PC-9 (cell line): ENCODE measurements at regions of chr14 and their contacts with region 1.

Region 1: DNA sequence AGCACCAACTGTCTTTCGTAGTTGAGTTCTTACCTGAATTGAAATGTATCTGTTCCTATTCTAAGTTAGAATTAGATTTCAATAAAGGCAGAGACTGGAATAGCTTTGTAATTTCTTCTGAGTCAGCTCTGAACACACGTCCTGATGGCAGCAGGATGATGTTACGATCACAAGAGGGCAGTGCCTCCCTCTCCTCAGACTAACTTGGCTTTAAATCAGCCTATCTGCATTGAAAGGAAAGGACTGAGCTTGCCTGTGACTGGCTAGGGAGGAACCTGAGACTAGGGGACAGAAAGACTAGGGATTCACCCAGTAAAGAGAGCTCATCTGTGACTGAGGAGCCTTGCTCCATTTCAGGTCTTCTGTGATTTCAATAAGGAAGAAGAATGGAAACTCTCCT is 323.7 kb upstream of the OR4E1 start:
- DNase-seq: no peak
- H3K4me3 ChIP-seq: no peak overlapping the region
- H3K27ac ChIP-seq: no peak overlapping the region
- H3K4me1 ChIP-seq: no peaks in the 10 kb centered on the region
- H3K27me3 ChIP-seq: no peaks in the 10 kb centered on the region
- CTCF ChIP-seq: no peak; the same call in 1 of the 2 replicates

Region 2: DNA sequence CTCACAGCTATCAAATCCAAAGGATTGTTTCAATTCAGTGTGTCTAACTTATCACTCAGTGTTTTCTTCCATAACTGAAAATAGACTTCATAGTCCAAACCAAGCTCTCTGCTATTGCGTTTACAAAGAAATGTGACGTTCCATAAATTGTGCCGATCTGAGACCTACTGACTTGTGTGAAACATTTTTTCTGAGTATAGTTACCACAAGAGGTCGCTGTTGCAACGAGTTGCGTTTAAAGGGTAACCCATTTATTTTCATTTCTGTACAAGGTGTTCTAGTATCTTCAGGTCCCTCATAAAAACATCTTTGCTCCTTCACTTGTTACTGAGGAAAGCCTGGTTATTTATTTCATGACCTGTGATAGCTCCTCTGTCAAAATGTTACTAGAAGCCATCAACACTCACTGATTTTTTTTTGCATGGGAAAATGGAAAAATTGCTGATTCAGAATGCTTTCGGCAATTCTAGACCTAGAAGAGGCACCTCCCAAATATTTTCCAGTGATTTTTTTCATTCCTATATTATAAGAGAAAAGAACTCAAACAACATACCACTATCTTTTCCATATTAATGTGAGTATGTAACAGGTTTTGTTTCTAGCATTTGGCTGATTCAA is 262.7 kb before region 1 on chr14:
- CTCF ChIA-PET with region 1: no interaction called
- POLR2A ChIA-PET with region 1: no interaction called
- intact Hi-C with region 1: no loop called
- DNase-seq: peak in 1 of 2 experiments; percentile 7
- H3K4me3 ChIP-seq: no peak overlapping the region
- H3K27ac ChIP-seq: no peak overlapping the region
- H3K4me1 ChIP-seq: no peaks in the 10 kb centered on the region
- H3K27me3 ChIP-seq: peaks cover 5% of the 10 kb centered on the region; the same call in 1 of the 2 replicates
- CTCF ChIP-seq: peak; percentile 78

Region 3: GRCh38 chr14:22010545-22011252 is 13.4 kb after region 1 on chr14:
- CTCF ChIA-PET with region 1: no interaction called
- POLR2A ChIA-PET with region 1: interaction called, 22 read pairs
- intact Hi-C with region 1: no loop called
- DNase-seq: no peak
- H3K4me3 ChIP-seq: no peak overlapping the region
- H3K27ac ChIP-seq: no peak overlapping the region
- H3K4me1 ChIP-seq: no peaks in the 10 kb centered on the region
- H3K27me3 ChIP-seq: no peaks in the 10 kb centered on the region
- CTCF ChIP-seq: no peak

Region 4: GRCh38 chr14:22070119-22071011 is 73.1 kb after region 1 on chr14:
- CTCF ChIA-PET with region 1: no interaction called
- POLR2A ChIA-PET with region 1: no interaction called
- intact Hi-C with region 1: no loop called
- DNase-seq: no peak
- H3K4me3 ChIP-seq: no peak overlapping the region
- H3K27ac ChIP-seq: no peak overlapping the region
- H3K4me1 ChIP-seq: no peaks in the 10 kb centered on the region
- H3K27me3 ChIP-seq: no peaks in the 10 kb centered on the region
- CTCF ChIP-seq: no peak

Region 5: GRCh38 chr14:22084393-22085281 is 87.3 kb after region 1 on chr14:
- CTCF ChIA-PET with region 1: interaction called, 5 read pairs
- POLR2A ChIA-PET with region 1: no interaction called
- intact Hi-C with region 1: loop called (anchors 10 kb)
- DNase-seq: peak; percentile 6 to 35
- H3K4me3 ChIP-seq: no peak overlapping the region
- H3K27ac ChIP-seq: no peak overlapping the region
- H3K4me1 ChIP-seq: no peaks in the 10 kb centered on the region
- H3K27me3 ChIP-seq: no peaks in the 10 kb centered on the region
- CTCF ChIP-seq: peak; percentile 82